Activated T-helper 1 cell treated with anti-CD3 and anti-CD28 coated beads, Interleukin-12 subunit alpha, Interleukin-12 subunit beta, Interleukin-2, Interleukin-4 antibody, amounts not matched to agents 30 ng/mL and 10 ng/mL and 1 ng/mL, durations not matched to agents 14 hours and 24 hours and 36 hours (primary cell): ENCODE measurements at regions of chr18 and their contacts with region 1.

Region 1: GRCh38 chr18:9913526-9914333 is at the start of gene VAPA:
- DNase-seq: peak; percentile 92
- H3K4me3 Mint-ChIP-seq: peak within 1 kb of the TSS; percentile 91
- H3K27ac Mint-ChIP-seq: peak within 1 kb of the TSS; percentile 94
- H3K4me1 Mint-ChIP-seq: peaks cover 27% of the 10 kb centered on the region
- H3K27me3 Mint-ChIP-seq: peaks cover 9% of the 10 kb centered on the region
- total RNA-seq, gene VAPA: 187 and 201 TPM in 2 replicates

Region 2: GRCh38 chr18:8608795-8609658 is 1304.7 kb before region 1 on chr18 and contains the start of gene RAB12:
- intact Hi-C with region 1: loop called (anchors 2 kb)
- DNase-seq: peak; percentile 83
- H3K4me3 Mint-ChIP-seq: peak within 1 kb of the TSS; percentile 91
- H3K27ac Mint-ChIP-seq: peak within 1 kb of the TSS; percentile 88
- H3K4me1 Mint-ChIP-seq: peaks cover 50% of the 10 kb centered on the region
- H3K27me3 Mint-ChIP-seq: peaks cover 12% of the 10 kb centered on the region
- total RNA-seq, gene RAB12: 18.9 and 19.2 TPM in 2 replicates

Region 3: GRCh38 chr18:9136315-9137155 is 777.2 kb before region 1 on chr18 and contains the start of gene ANKRD12:
- intact Hi-C with region 1: loop called (anchors 10 kb)
- DNase-seq: peak; percentile 98
- H3K4me3 Mint-ChIP-seq: peak within 1 kb of the TSS; percentile 94
- H3K27ac Mint-ChIP-seq: peak within 1 kb of the TSS; percentile 99
- H3K4me1 Mint-ChIP-seq: peaks cover 54% of the 10 kb centered on the region
- H3K27me3 Mint-ChIP-seq: no peaks in the 10 kb centered on the region
- total RNA-seq, gene ANKRD12: 61.3 and 62.2 TPM in 2 replicates

Region 4: DNA sequence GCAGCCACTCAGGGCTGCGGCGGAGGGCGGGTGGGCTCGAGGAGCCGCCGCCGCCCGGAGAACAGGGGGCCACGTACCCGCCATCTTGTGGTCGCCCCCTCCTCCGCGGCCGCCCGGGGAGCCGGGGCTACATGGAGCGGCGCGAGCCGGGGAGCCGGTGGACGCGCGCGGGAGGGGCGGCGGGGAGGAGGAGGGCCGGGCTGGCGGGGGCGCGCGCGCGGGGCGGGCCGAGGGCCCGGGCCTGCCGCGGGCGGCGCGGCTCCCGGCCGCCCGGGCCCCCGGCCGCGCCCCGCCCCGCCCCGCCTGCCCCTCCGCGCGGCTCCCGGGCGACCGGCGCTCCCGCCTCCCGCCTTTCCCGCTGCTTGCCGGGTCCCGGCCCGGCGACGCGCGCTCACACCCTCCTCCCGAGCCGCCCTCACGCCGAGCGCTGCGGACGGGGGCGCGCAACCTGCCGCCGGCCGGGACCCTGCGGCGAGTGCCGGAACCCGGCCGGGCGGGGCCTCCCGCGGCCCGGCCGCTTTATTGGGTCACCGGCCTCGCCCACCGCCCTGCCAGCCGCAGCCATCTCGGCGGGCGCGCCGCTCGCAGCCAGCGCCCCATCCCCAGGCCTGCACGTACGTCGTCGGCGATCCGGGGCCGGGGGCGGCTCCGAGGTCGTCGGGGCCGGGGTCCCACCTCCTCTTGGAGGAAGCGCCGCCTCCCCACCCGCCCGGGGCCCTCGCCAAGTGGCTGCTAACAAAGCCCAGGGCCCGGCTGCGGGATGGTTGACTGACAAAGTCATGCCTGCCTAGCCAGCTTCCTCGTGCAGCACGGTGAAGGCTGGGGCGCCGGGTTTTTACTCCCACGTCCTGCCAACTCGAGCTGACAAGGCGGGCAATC is 299.1 kb before region 1 on chr18 and contains the start of gene PPP4R1:
- intact Hi-C with region 1: loop called (anchors 1 kb)
- DNase-seq: peak; percentile 61
- H3K4me3 Mint-ChIP-seq: peak within 1 kb of the TSS; percentile 95
- H3K27ac Mint-ChIP-seq: peak within 1 kb of the TSS; percentile 92
- H3K4me1 Mint-ChIP-seq: peaks cover 42% of the 10 kb centered on the region
- H3K27me3 Mint-ChIP-seq: peaks cover 2% of the 10 kb centered on the region
- total RNA-seq, gene PPP4R1: 49.5 and 54.8 TPM in 2 replicates

Region 5: GRCh38 chr18:9876867-9877654 is 36.7 kb before region 1 on chr18:
- intact Hi-C with region 1: loop called (anchors 2 kb)
- DNase-seq: no peak
- H3K4me3 Mint-ChIP-seq: no peak overlapping the region
- H3K27ac Mint-ChIP-seq: no peak overlapping the region
- H3K4me1 Mint-ChIP-seq: peaks cover 12% of the 10 kb centered on the region
- H3K27me3 Mint-ChIP-seq: peaks cover 5% of the 10 kb centered on the region

Region 6: GRCh38 chr18:10525371-10526210 is 611.9 kb after region 1 on chr18 and contains the start of gene NAPG:
- intact Hi-C with region 1: loop called (anchors 1 kb)
- DNase-seq: peak; percentile 91
- H3K4me3 Mint-ChIP-seq: peak within 1 kb of the TSS; percentile 97
- H3K27ac Mint-ChIP-seq: peak within 1 kb of the TSS; percentile 98
- H3K4me1 Mint-ChIP-seq: peaks cover 63% of the 10 kb centered on the region
- H3K27me3 Mint-ChIP-seq: peaks cover 7% of the 10 kb centered on the region
- total RNA-seq, gene NAPG: 37.4 and 40.3 TPM in 2 replicates